H1 (cell line): ENCODE measurements at regions of chr7 and their contacts with region 1.

Region 1: GRCh38 chr7:140326116-140326928 is 72.0 kb downstream of the SLC37A3 start:
- DNase-seq: peak in 1 of 2 experiments; percentile 59
- H3K4me3 ChIP-seq: no peak overlapping the region
- H3K27ac ChIP-seq: no peak overlapping the region
- H3K4me1 ChIP-seq: peaks cover 4 to 12% (median 6%) of the 10 kb centered on the region in 4 experiments; a peak in 6 of 7 replicates
- H3K27me3 ChIP-seq: no peaks in the 10 kb centered on the region
- CTCF ChIP-seq: peak; percentile 45 to 60 (median 49)
- EP300 ChIP-seq: no peak
- POLR2A ChIP-seq: no peak
- RAD21 ChIP-seq: peak; percentile 76 to 80

Region 2: GRCh38 chr7:140316165-140316661 is 10.1 kb before region 1 on chr7:
- CTCF ChIA-PET with region 1: interaction called, 12 read pairs
- POLR2A ChIA-PET with region 1: no interaction called
- DNase-seq: no peak
- H3K4me3 ChIP-seq: no peak overlapping the region
- H3K27ac ChIP-seq: no peak overlapping the region
- H3K4me1 ChIP-seq: no peaks in the 10 kb centered on the region
- H3K27me3 ChIP-seq: no peaks in the 10 kb centered on the region
- CTCF ChIP-seq: no peak
- EP300 ChIP-seq: no peak
- POLR2A ChIP-seq: no peak
- RAD21 ChIP-seq: no peak